HEK293T (cell line): ENCODE measurements at regions of chr12 and their contacts with region 1.

Region 1: GRCh38 chr12:101773650-101774162 is 34.4 kb upstream of the SYCP3 start:
- DNase-seq: peak; percentile 65

Region 2: DNA sequence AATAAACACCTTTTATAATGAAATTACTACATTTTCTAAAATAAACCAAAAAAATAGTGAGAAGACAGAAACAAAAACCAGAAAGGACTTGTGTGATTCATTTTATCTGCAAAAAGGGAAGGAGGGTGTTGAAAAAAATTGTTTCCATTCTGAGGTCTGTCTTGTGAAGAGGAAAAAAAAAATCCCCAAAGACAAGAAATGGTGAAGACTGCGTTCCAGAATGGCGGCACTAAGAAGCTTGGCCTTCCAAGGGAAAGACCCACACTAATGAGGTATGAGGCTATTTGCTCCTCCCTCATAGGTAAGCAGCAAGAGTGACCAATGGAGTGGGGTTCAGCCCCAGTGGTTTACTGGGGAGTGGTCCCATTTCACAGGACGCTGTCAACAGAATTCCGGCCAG is 22.1 kb after region 1 on chr12:
- CTCF ChIA-PET with region 1: no interaction called
- POLR2A ChIA-PET with region 1: no interaction called
- DNase-seq: no peak

Region 3: GRCh38 chr12:101830367-101831325 is 56.9 kb after region 1 on chr12 and contains the start of gene GNPTAB:
- CTCF ChIA-PET with region 1: interaction called, 15 read pairs
- POLR2A ChIA-PET with region 1: interaction called, 3 read pairs
- DNase-seq: peak; percentile 97

Region 4: GRCh38 chr12:101839324-101840283 is 65.9 kb after region 1 on chr12:
- CTCF ChIA-PET with region 1: interaction called, 21 read pairs
- POLR2A ChIA-PET with region 1: no interaction called
- DNase-seq: peak; percentile 65